PC-3 (cell line): ENCODE measurements at regions of chr12 and their contacts with region 1.

Region 1: DNA sequence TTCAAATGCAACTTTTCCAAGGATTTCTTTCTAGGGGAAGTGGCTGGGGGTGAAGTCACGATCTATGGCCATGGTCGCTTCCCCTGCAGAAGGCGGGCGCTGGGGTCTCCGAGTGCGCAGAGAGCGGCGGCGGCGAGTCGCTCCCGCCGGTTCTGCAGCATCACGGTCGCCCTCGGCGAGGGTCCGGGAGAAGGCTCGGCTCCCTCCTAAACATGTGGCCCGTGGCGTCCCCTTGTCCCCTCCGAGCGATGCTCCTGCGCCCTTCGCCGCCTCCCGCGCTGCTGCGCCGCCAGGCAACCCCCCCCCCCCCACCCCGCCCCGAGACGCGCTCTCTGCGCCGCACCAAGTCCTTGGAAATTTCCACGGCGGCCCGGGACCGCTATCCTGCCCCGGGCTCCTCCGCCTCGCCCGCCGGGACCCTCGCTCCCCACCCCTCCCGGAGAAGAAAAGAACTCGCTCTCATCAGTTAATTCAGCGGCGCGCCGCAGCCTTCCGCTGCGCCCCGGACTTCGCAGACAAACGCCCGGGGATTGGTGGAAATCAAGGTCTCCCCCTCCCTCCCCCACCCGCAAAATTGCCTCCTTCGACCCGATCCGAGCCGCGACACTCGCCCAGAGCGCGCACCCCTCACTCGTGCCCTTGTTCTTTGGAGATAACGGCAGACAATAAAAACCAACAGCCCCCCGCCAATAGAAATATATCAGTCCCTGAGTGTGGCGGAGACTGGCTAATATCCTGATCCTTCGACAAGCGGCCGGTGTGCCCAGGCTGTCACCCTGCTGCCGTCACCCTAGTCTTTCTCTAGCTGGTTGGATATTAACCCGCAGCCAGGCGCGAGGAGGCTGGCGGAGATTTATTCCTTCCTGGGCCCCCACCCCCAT is at the start of gene ST8SIA1:
- DNase-seq: no peak
- ATAC-seq: peak; percentile 39
- H3K4me3 ChIP-seq: peak within 1 kb of the TSS; percentile 70
- H3K27ac ChIP-seq: no peak within 1 kb of the TSS
- H3K4me1 ChIP-seq: no peaks in the 10 kb centered on the region; the same call in 1 of the 2 replicates
- H3K27me3 ChIP-seq: no peaks in the 10 kb centered on the region
- CTCF ChIP-seq: no peak
- total RNA-seq, gene ST8SIA1: not detected in 2 replicates

Region 2: DNA sequence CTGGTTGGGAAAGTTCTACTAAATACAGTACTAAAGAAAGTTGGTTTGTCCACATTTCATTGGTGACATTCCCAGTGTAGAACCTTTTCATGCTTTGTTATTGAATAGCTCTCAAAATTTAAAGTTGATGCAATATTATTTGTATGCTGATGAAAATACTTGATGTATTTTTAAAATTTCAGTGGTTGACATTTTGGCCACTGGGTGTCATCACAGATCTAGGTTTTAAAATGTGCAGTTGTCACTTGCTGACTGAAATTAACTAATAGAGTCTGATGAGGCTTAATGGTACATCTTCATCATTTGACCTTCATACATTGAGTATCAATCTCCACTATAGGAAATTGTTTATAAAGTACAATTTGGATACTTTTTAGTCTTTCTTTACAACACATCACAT is 251.5 kb before region 1 on chr12:
- CTCF ChIA-PET with region 1: interaction called, 4 read pairs
- POLR2A ChIA-PET with region 1: no interaction called
- intact Hi-C with region 1: loop called (anchors 1 kb)
- DNase-seq: peak; percentile 46
- ATAC-seq: no peak
- H3K4me3 ChIP-seq: no peak overlapping the region
- H3K27ac ChIP-seq: no peak overlapping the region
- H3K4me1 ChIP-seq: peaks cover 12% of the 10 kb centered on the region; the same call in 1 of the 2 replicates
- H3K27me3 ChIP-seq: no peaks in the 10 kb centered on the region
- CTCF ChIP-seq: peak; percentile 62

Region 3: GRCh38 chr12:22100958-22101748 is 233.5 kb before region 1 on chr12:
- CTCF ChIA-PET with region 1: no interaction called
- POLR2A ChIA-PET with region 1: no interaction called
- intact Hi-C with region 1: loop called (anchors 5 kb)
- DNase-seq: peak; percentile 46
- ATAC-seq: peak; percentile 55; the same call in 1 of the 2 replicates
- H3K4me3 ChIP-seq: no peak overlapping the region
- H3K27ac ChIP-seq: no peak overlapping the region
- H3K4me1 ChIP-seq: no peaks in the 10 kb centered on the region
- H3K27me3 ChIP-seq: no peaks in the 10 kb centered on the region
- CTCF ChIP-seq: peak; percentile 62

Region 4: DNA sequence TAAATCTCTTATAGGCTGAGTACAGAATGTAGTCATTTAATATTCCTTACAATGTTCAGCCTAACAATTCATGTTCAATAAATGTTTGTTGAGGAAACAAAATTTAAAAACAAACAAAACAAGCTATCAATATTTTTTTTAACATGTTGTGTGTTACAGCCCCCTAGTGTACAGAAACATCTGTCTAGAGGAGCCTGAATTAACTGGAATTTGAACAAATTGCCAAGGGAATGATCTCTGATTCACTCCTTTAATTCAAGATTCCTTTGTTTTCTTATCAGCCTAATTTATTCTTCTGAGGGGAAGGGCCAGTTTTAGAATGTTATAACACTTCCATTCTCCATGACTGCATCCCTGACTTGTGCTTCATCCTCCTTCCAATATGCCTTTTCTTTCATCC is 161.5 kb before region 1 on chr12:
- CTCF ChIA-PET with region 1: interaction called, 3 read pairs
- POLR2A ChIA-PET with region 1: no interaction called
- intact Hi-C with region 1: loop called (anchors 10 kb)
- DNase-seq: no peak
- ATAC-seq: no peak
- H3K4me3 ChIP-seq: no peak overlapping the region
- H3K27ac ChIP-seq: no peak overlapping the region
- H3K4me1 ChIP-seq: no peaks in the 10 kb centered on the region
- H3K27me3 ChIP-seq: peaks cover 7% of the 10 kb centered on the region; the same call in 1 of the 2 replicates
- CTCF ChIP-seq: 0 out of 2 replicates have a peak, but pooled peaks have one; percentile 37

Region 5: DNA sequence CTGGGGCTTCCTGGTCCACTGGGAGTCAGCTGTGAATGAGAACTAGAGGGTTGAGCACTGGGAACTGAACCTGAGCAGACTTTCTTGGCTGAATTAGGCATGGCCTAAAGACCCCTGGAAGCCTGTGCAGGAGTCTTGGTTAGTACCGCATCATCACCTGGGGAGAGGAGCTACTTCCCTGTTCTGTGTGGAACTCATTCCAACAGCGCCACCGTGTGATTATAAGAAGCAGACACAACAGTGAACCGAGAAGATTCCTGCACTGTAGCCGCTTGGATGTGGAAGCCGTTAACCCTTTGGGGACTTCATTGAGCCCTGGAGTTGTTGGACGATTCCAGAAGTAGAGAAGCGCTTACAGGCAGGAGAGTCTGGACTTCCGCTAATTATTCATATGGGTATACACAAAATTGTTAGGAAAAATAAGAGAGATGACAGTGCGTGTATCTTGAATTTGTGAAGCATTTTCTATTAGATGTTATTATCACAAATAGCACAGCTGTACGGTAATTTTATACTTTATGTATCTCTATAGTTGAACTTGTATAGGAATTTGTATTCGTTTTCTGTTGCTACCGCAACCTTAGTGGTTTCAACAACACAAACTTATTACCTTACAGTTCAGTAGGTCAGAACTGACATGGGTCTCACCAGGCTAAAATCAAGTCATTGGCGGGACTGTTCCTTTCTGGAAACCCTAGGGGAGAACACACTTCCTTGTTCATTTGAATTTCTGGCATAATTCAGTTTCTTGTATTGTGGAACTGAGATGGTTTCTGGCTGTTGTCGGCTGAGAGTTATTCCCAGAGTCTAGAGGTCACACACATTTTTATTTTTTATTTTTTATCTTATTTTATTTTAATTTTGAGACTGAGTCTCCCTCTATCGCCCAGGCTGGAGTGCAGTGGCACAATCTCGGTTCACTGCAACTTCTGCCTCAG is 109.0 kb after region 1 on chr12:
- CTCF ChIA-PET with region 1: interaction called, 6 read pairs
- POLR2A ChIA-PET with region 1: no interaction called
- intact Hi-C with region 1: loop called (anchors 1 kb)
- DNase-seq: peak; percentile 75
- ATAC-seq: peak; percentile 100
- H3K4me3 ChIP-seq: no peak overlapping the region
- H3K27ac ChIP-seq: no peak overlapping the region
- H3K4me1 ChIP-seq: no peaks in the 10 kb centered on the region
- H3K27me3 ChIP-seq: no peaks in the 10 kb centered on the region
- CTCF ChIP-seq: peak; percentile 79

Region 6: DNA sequence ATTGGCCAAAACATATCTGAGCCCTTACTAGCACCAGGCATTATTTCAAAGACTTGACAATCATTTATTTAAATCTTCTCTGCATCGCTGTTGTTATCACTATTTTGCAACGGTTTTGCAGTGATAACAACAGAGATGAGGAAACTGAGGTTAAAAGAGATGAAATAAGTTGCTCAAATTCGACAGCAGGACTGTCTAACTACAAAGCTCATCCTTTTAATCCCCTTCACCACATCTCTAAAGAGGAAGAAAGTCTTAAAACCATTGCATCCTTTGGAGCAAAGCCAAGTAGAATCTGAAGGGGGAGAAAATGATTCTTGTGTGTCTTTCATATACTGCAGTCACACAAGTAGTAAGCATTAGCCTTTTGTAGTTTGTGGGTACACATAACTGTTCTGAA is 275.5 kb after region 1 on chr12:
- CTCF ChIA-PET with region 1: no interaction called
- POLR2A ChIA-PET with region 1: no interaction called
- intact Hi-C with region 1: no loop called
- DNase-seq: no peak
- ATAC-seq: no peak
- H3K4me3 ChIP-seq: no peak overlapping the region
- H3K27ac ChIP-seq: no peak overlapping the region
- H3K4me1 ChIP-seq: no peaks in the 10 kb centered on the region
- H3K27me3 ChIP-seq: no peaks in the 10 kb centered on the region
- CTCF ChIP-seq: no peak